ENCODE measurements at regions of chr2 and their contacts with region 1.

Region 1: DNA sequence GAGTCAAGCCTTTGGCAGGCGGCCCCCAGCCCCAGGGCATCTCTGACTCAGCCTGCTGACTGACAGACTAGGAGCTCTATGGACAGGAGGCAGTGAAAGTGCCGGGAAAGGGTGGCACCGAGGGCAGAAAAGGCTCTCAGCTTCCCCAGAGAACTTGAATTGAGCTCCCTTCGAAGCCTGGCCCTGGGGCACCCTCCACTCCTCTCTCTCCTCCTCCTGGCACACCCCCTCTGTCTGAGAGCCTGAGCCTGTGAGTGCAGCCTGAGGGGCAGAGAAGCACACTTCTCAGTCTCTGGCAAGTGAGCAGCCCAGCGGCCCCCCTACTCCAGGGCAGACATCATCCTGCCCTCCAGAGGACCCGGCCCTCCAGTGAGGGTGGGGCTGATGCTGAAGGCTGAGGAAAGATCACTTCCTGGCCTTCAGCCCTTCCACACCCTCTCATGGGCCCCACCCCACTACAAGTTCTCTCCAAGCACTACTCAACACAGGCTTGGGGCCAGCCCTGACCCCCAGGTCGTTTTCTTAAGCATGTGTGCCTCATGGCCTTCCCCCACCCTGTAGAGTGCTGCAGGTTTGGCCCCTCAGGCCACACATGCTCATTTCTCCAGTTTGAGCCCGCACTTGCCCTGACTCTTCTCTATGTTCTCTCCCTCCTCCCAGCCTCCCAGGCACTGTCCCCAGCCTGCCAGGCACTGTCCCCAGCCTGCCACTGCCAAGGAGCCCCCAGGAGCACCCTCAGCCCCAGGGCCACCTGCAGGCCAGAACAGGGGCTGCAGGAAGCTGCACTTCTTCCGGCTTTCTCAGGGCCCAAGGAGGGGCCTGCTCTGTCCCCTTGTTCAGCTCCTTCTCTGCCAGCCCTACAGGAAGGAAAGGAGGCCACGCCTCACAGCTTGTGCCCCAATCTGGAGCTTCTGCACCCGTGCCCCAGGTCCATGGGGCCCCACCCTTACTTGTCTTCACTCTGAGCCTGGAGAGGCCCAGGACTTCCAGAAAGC is 31.8 kb downstream of the CYP26B1 start:
- DNase-seq: peak; percentile 61 to 78
- H3K4me3 ChIP-seq: no peak overlapping the region
- H3K27ac ChIP-seq: no peak overlapping the region
- H3K4me1 ChIP-seq: no peaks in the 10 kb centered on the region; a peak in 2 of 7 replicates
- H3K27me3 ChIP-seq: peaks cover 0 to 2% (median 0%) of the 10 kb centered on the region in 4 experiments; a peak in 1 of 7 replicates
- CTCF ChIP-seq: peak; percentile 71 to 80 (median 78)
- EP300 ChIP-seq: no peak
- POLR2A ChIP-seq: no peak
- RAD21 ChIP-seq: peak; percentile 58 to 72

Region 2: GRCh38 chr2:72104821-72105588 is 10.8 kb before region 1 on chr2:
- CTCF ChIA-PET with region 1: interaction called, 16 read pairs
- POLR2A ChIA-PET with region 1: no interaction called
- DNase-seq: peak in 1 of 2 experiments; percentile 50
- H3K4me3 ChIP-seq: no peak overlapping the region
- H3K27ac ChIP-seq: no peak overlapping the region
- H3K4me1 ChIP-seq: no peaks in the 10 kb centered on the region; a peak in 3 of 7 replicates
- H3K27me3 ChIP-seq: no peaks in the 10 kb centered on the region
- CTCF ChIP-seq: peak; percentile 48 to 63 (median 51)
- EP300 ChIP-seq: no peak
- POLR2A ChIP-seq: no peak
- RAD21 ChIP-seq: peak; percentile 68 to 76

Region 3: DNA sequence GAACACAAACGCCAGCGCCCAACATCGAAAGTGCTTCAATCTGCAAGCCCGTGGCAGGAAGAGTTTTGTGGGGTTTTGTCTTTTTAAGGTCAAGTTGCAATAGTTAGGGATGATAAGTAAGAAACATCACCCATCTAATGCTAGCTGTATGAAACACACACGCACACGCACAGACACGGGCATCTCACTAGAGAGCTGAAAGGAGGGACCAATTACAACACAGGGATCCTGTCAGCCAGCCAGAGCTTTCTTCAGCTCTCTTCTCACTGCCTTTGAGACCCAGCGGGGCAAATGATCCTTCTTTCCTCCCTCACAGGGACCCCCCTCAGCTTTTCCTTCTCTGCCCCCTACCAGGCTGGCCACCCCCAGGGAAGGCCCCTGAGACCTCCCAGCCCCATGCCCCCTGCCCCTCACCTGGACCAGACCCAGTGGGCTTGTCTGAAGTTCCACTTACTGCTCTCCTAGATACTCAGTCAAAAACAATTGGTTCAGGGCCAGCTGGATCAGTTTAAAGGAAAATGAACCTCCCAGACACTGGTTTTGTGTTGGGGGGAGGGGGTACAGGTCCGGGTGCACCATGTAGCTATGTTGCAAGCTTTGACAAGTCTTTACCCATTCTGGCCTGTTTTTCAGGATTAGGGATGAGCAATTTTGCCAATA is 14.0 kb after region 1 on chr2:
- CTCF ChIA-PET with region 1: interaction called, 70 read pairs
- POLR2A ChIA-PET with region 1: no interaction called
- DNase-seq: peak in 1 of 2 experiments; percentile 38
- H3K4me3 ChIP-seq: no peak overlapping the region
- H3K27ac ChIP-seq: no peak overlapping the region
- H3K4me1 ChIP-seq: peaks cover 0 to 9% (median 6%) of the 10 kb centered on the region in 4 experiments; a peak in 5 of 7 replicates
- H3K27me3 ChIP-seq: peaks cover 0 to 4% (median 0%) of the 10 kb centered on the region in 4 experiments; a peak in 1 of 7 replicates
- CTCF ChIP-seq: no peak
- EP300 ChIP-seq: no peak
- POLR2A ChIP-seq: no peak
- RAD21 ChIP-seq: no peak

Region 4: DNA sequence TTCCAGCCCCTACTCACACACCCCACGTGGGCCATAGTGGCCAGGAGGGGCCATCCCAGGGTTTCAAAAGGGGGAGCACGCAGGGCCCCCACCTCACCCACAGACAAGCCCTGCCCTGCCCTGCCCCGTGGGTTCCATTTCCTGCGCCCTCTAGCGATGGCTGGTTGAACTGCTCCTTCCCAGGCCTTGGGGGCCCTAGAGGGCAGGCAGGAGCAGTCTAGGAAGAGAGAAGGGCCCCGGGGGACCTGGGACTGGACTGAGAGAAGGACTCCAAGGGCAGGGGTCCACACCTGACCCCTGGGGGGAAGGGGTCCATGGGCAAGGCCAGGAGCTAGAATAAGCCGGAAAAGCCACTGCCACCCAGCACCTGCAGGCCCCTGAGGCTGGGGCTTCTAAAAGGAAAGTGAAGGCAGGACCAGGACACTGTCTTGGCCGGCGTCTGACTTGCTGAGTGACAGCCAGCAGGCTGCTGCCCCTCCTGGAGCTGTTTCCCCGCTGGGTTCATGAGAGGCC is 21.7 kb after region 1 on chr2:
- CTCF ChIA-PET with region 1: interaction called, 70 read pairs
- POLR2A ChIA-PET with region 1: no interaction called
- DNase-seq: peak in 1 of 2 experiments; percentile 98
- H3K4me3 ChIP-seq: no peak overlapping the region
- H3K27ac ChIP-seq: no peak overlapping the region
- H3K4me1 ChIP-seq: peaks cover 0 to 11% (median 6%) of the 10 kb centered on the region in 4 experiments; a peak in 5 of 7 replicates
- H3K27me3 ChIP-seq: peaks cover 12 to 32% (median 29%) of the 10 kb centered on the region in 4 experiments
- CTCF ChIP-seq: peak in 2 of 3 experiments; percentile 90 to 98; a peak in 3 of 4 replicates
- EP300 ChIP-seq: no peak
- POLR2A ChIP-seq: no peak
- RAD21 ChIP-seq: peak; percentile 59 to 70

Region 5: DNA sequence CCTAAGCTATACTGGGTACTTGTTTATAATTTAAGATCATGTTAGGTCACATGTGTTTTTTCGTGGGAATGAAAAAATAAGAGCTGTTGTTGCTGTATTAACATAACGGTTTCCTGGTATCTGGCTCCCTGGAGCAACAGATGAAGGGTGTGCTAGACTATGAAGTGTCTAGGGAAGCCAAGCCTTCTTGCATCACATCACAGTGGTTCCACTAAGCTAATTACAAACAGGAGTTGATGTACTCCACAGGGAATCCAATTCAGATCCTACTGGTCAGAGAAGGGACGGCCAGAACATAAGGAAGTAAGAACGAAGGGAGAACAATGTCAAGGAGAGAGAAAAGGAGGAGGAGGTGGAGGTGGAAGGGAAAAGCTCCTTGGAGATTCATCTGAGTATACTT is 224.8 kb after region 1 on chr2:
- CTCF ChIA-PET with region 1: no interaction called
- POLR2A ChIA-PET with region 1: no interaction called
- DNase-seq: no peak
- H3K4me3 ChIP-seq: no peak overlapping the region
- H3K27ac ChIP-seq: no peak overlapping the region
- H3K4me1 ChIP-seq: no peaks in the 10 kb centered on the region
- H3K27me3 ChIP-seq: no peaks in the 10 kb centered on the region
- CTCF ChIP-seq: no peak
- EP300 ChIP-seq: no peak
- POLR2A ChIP-seq: no peak
- RAD21 ChIP-seq: no peak

Measured in H1 (cell line).